ENCODE measurements at regions of chr11 and their contacts with region 1.

Region 1: DNA sequence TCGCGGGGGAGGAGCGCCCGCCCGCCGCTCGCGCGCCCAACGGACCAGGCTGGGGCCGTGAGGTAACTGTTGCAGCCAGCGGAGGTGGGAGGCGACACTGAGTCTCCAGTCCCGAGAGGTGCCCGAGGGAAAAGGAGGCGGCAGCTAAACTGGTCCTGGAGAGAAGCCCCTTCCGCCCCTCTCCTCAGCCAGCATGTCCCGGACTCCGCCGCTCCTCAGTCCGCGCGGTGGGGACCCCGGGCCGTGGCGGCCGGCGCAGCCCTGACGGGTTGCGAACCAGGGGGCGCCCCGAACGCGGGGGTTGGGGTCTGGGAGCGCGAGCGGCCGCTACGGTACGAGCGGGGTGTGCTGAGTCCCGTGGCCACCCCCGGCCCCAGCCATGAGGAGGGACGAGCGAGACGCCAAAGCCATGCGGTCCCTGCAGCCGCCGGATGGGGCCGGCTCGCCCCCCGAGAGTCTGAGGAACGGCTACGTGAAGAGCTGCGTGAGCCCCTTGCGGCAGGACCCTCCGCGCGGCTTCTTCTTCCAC is at the start of gene PDE3B:
- DNase-seq: peak; percentile 35
- H3K4me3 ChIP-seq: peak within 1 kb of the TSS; percentile 51 to 65 (median 64)
- H3K27ac ChIP-seq: peak within 1 kb of the TSS; percentile 15
- H3K4me1 ChIP-seq: peaks cover 18% of the 10 kb centered on the region
- H3K27me3 ChIP-seq: peaks cover 8 to 15% of the 10 kb centered on the region in 2 experiments
- CTCF ChIP-seq: no peak
- POLR2A ChIP-seq: no peak
- total RNA-seq, gene PDE3B: 1.7 and 1.9 TPM in 2 replicates

Region 2: DNA sequence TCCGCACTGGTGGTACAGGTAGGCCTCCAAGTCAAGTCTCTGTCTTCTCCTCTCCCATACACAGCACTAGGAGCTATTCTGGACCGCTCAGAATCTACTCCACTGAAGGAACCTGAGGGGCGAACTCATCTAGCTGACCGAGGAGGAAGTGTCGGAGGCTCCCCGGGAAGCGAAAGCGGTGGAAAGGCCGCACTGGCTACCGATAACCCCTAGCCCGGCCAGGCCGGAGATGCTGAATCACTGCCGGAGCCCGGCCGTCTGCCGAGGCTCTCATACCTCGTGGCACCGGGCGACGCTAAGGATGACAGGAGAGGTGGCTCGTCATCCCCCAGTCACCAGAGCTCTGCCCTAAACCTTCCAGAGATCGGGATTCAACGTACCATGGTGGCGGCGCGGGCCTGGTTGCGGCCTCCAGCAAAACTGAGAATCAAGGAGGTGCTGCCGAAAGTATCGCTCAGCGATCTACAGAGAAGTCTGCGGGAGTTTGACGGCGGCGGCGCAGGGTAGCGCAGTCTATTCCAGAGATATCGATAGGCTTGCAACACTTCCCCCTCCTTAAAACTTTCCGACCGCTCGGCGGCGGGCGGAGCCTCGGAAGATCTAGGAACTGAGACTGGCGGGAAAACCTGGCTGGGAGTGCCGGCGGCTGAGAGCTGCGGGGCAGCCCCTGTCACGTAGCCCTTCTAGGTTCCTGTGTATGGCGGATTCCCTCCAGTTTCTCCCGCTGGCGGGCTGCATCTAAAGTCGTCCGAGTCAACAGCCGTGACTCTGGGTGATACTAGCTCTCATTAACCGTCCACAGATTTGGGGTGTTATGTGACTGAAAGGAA is 123.6 kb before region 1 on chr11 and contains the start of gene PSMA1:
- CTCF ChIA-PET with region 1: interaction called, 4 read pairs
- POLR2A ChIA-PET with region 1: no interaction called
- dilution Hi-C with region 1: no loop called
- intact Hi-C with region 1: loop called (anchors 1 kb)
- DNase-seq: peak; percentile 98
- H3K4me3 ChIP-seq: peak within 1 kb of the TSS; percentile 86 to 97 (median 88)
- H3K27ac ChIP-seq: peak within 1 kb of the TSS; percentile 97
- H3K4me1 ChIP-seq: peaks cover 15% of the 10 kb centered on the region
- H3K27me3 ChIP-seq: no peaks in the 10 kb centered on the region
- CTCF ChIP-seq: no peak
- POLR2A ChIP-seq: peak; percentile 88
- total RNA-seq, gene PSMA1: 194 and 203 TPM in 2 replicates

Region 3: DNA sequence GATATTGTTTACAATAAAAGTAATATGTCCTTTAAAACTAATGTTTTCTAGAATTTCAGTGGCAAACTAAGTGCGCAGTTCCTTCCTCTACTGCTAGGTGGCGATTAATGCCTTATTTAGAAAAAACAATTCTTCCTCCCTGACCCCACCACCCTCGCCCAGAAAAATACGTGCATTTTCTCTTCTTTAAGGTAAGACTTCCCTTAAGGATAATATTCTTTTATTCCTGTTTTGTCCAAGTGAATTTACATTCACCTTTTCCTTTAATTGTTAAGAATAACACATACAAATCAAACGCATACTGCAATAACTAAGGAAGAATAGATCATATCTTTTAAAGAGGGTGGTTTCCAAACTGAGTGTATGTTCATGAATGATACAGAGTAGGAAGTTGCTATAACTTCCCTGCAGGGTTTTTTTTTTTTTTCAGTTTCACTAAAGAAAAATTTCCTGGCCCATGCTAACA is 106.6 kb before region 1 on chr11:
- CTCF ChIA-PET with region 1: interaction called, 8 read pairs
- POLR2A ChIA-PET with region 1: no interaction called
- dilution Hi-C with region 1: no loop called
- intact Hi-C with region 1: loop called (anchors 1 kb)
- DNase-seq: peak; percentile 60
- H3K4me3 ChIP-seq: no peak overlapping the region
- H3K27ac ChIP-seq: no peak overlapping the region
- H3K4me1 ChIP-seq: no peaks in the 10 kb centered on the region
- H3K27me3 ChIP-seq: peaks cover 9 to 10% of the 10 kb centered on the region in 2 experiments
- CTCF ChIP-seq: peak; percentile 53 to 62
- POLR2A ChIP-seq: no peak

Region 4: GRCh38 chr11:14764579-14765527 is 121.1 kb after region 1 on chr11:
- CTCF ChIA-PET with region 1: no interaction called
- POLR2A ChIA-PET with region 1: no interaction called
- dilution Hi-C with region 1: no loop called
- intact Hi-C with region 1: loop called (anchors 5 kb)
- DNase-seq: peak; percentile 27
- H3K4me3 ChIP-seq: no peak overlapping the region
- H3K27ac ChIP-seq: no peak overlapping the region
- H3K4me1 ChIP-seq: peaks cover 2% of the 10 kb centered on the region
- H3K27me3 ChIP-seq: peaks cover 0 to 1% of the 10 kb centered on the region in 2 experiments
- CTCF ChIP-seq: no peak
- POLR2A ChIP-seq: no peak

Region 5: DNA sequence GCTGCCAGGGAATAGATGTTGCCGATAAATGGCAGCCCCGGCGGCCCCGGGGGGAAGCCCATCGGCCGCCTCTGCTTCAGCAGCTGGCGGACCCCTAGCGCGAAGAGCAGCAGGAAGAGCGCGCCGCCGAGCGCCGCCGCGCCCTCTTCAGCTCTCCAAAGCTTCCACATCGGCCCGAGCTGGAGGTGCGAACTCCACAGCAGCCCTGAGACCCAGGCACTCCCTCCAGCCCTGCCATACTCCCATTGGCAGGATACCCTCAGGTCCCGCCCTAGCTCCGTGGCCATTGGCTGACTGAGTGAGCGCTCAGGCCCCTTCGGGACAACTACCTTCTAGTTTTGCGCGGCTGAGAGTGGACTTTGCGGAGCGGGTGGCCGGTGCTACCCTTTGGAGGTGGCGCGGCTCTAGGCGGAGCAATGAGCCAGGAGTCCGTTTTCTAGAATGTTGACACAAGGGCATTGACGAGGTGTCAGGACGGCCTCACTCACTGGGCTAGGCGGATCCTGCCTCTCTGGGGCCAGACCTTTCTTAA is 248.3 kb after region 1 on chr11 and contains the start of gene CYP2R1:
- CTCF ChIA-PET with region 1: no interaction called
- POLR2A ChIA-PET with region 1: no interaction called
- dilution Hi-C with region 1: no loop called
- intact Hi-C with region 1: loop called (anchors 5 kb)
- DNase-seq: peak; percentile 98
- H3K4me3 ChIP-seq: peak within 1 kb of the TSS; percentile 52 to 73 (median 60)
- H3K27ac ChIP-seq: peak within 1 kb of the TSS; percentile 54
- H3K4me1 ChIP-seq: peaks cover 9% of the 10 kb centered on the region
- H3K27me3 ChIP-seq: no peaks in the 10 kb centered on the region
- CTCF ChIP-seq: no peak
- POLR2A ChIP-seq: no peak
- total RNA-seq, gene CYP2R1: 8.0 and 11.6 TPM in 2 replicates